Dorsolateral prefrontal cortex (tissue), 120 donors: ENCODE measurements at regions of chr10 and their contacts with region 1.

Region 1: GRCh38 chr10:68901104-68901927 is at the start of gene DDX50:
- DNase-seq: peak; percentile 98 to 100 (median 99)
- H3K4me3 ChIP-seq: peak within 1 kb of the TSS; percentile 64 to 100 (median 93)
- H3K27ac ChIP-seq: peak within 1 kb of the TSS; percentile 83 to 100 (median 99)
- H3K27me3 ChIP-seq: no peaks in the 10 kb centered on the region
- CTCF ChIP-seq: peak in 28 of 56 donors; percentile 8 to 53 (median 35)
- total RNA-seq, gene DDX50: 20.8 to 39.0 (median 29.0) TPM

Region 2: DNA sequence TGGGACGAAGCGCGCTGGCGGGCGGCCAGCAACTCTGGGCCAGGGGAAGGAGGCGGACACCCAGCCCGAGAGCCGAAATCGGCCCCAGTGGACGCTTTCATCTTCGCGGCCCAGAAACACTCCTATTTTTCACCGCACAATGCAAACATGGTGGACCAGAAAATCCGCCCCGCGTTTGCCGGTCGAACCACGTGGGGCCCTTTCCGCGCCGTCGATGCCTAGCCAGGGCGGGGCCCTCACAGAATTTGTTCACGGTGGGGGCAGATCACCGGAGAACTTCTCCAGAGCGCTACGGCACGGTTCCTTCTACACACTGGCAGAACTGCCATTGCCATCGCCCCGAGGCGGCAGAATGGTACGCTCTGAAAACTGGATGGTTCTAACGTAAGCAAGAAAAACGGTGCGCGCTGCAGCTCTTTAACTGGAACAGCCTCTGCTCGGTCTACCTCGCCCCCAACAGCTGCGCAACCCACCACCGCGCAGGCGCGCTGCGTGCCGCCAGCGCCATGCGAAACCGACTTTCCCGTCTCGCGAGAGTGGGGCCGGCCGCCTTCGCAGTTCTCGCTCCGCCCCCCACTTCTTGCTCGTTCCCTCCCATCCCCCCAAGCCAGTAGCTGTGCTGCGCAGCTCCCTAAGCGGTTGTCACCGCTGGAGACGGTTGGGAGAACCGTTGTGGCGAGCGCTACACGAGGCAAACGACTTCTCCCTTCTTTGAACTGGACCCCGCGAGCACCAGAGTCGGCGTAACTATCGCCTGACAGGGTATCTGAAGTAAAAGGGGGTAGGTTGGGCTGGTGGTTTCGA is 569.7 kb before region 1 on chr10 and contains the start of gene HNRNPH3:
- intact Hi-C with region 1: loop called in 1 of 2 experiments (anchors 10 kb)
- DNase-seq: peak; percentile 93 to 98 (median 96)
- H3K4me3 ChIP-seq: peak within 1 kb of the TSS; percentile 64 to 99 (median 90)
- H3K27ac ChIP-seq: peak within 1 kb of the TSS; percentile 91 to 100 (median 99)
- H3K27me3 ChIP-seq: no peaks in the 10 kb centered on the region
- CTCF ChIP-seq: peak in 10 of 56 donors; percentile 2 to 28 (median 10)
- total RNA-seq, gene HNRNPH3: 77.7 to 201 (median 131) TPM

Region 3: DNA sequence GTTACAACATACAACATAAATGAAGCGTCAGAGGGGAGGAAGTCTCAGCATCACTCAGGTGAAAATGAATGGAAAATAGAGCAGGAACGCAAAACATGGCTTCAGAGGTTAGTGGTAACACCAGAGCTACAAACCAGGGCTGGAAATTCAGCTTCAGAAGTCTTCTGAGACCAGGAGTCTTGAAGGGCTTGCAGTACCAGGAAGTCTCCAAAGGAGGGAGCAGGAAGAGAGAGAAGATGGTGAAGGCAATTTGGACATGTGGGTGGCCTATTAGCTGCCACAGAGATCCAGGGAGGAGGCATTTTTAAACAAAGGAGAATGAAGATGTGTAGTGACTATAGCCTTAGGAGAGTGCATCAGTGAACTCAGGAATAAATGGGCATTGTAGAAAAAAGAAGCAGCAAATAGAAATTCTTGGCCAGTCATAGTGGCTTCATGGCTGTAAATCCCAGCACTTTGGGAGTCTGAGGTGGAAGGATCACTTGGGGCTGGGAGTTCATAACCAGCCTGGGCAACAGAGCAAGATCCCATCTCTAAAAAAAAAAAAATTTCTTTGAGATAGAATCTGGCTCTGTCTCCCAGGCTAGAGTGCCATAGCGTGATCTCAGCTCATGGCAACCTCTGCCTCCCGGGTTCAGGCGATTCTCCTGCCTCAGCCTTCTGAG is 350.4 kb before region 1 on chr10:
- intact Hi-C with region 1: loop called in 1 of 2 experiments (anchors 10 kb)
- DNase-seq: peak in 2 of 10 donors; percentile 7 to 39
- H3K4me3 ChIP-seq: no peak overlapping the region
- H3K27ac ChIP-seq: no peak overlapping the region
- H3K27me3 ChIP-seq: no peaks in the 10 kb centered on the region
- CTCF ChIP-seq: peak; percentile 33 to 80 (median 71)

Region 4: DNA sequence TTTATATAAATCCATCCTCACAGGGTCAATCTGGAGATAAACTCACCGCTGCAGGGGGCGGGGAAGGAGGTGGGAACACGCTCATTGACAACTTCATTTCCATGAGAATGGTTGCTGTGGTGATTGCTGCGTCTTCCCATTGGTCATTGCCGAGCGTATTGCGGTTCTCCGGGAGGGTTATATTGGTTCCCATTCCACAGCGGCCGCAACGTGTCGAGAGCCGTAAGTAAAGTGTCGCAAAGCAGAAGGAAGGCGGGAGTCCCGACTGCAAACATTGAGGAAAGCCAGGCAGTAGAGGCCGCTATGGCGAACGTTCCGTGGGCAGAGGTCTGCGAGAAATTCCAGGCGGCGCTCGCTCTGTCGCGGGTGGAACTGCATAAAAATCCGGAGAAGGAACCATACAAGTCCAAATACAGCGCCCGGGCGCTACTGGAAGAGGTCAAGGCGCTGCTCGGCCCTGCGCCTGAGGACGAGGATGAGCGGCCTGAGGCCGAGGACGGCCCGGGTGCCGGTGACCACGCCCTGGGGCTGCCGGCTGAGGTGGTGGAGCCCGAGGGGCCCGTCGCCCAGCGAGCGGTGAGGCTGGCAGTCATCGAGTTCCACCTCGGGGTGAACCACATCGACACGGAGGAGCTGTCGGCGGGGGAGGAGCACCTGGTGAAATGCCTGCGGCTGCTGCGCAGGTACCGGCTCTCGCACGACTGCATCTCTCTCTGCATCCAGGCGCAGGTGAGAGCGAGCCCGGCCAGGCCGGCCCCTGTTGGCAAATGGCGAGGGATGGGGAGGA is 87.4 kb after region 1 on chr10 and contains the start of gene KIFBP:
- intact Hi-C with region 1: loop called in 1 of 2 experiments (anchors 5 kb)
- DNase-seq: peak; percentile 86 to 99 (median 96)
- H3K4me3 ChIP-seq: peak within 1 kb of the TSS; percentile 58 to 100 (median 93)
- H3K27ac ChIP-seq: peak within 1 kb of the TSS; percentile 0 to 94 (median 86)
- H3K27me3 ChIP-seq: no peaks in the 10 kb centered on the region
- CTCF ChIP-seq: peak in 55 of 56 donors; percentile 17 to 83 (median 61)
- total RNA-seq, gene KIFBP: 33.1 to 77.4 (median 62.0) TPM